A549 (cell line): ENCODE measurements at regions of chr7 and their contacts with region 1.

Region 1: GRCh38 chr7:79176859-79177477 is 276.5 kb downstream of the MAGI2 start:
- DNase-seq: peak; percentile 5 to 55
- ATAC-seq: peak; percentile 70 to 78; a peak in 3 of 6 replicates
- H3K4me3 ChIP-seq: no peak overlapping the region
- H3K27ac ChIP-seq: no peak overlapping the region
- H3K4me1 ChIP-seq: no peaks in the 10 kb centered on the region
- CTCF ChIP-seq: peak; percentile 68
- EP300 ChIP-seq: no peak
- POLR2A ChIP-seq: no peak
- RAD21 ChIP-seq: peak; percentile 77 to 83

Region 2: GRCh38 chr7:78742694-78743093 is 434.3 kb before region 1 on chr7:
- CTCF ChIA-PET with region 1: no interaction called
- POLR2A ChIA-PET with region 1: no interaction called
- DNase-seq: no peak
- ATAC-seq: no peak
- H3K4me3 ChIP-seq: no peak overlapping the region
- H3K27ac ChIP-seq: no peak overlapping the region
- H3K4me1 ChIP-seq: no peaks in the 10 kb centered on the region
- CTCF ChIP-seq: no peak
- EP300 ChIP-seq: no peak
- POLR2A ChIP-seq: no peak
- RAD21 ChIP-seq: no peak

Region 3: GRCh38 chr7:79165225-79165624 is 11.7 kb before region 1 on chr7:
- CTCF ChIA-PET with region 1: interaction called, 12 read pairs
- POLR2A ChIA-PET with region 1: no interaction called
- DNase-seq: no peak
- ATAC-seq: no peak
- H3K4me3 ChIP-seq: no peak overlapping the region
- H3K27ac ChIP-seq: no peak overlapping the region
- H3K4me1 ChIP-seq: no peaks in the 10 kb centered on the region
- CTCF ChIP-seq: no peak
- EP300 ChIP-seq: no peak
- POLR2A ChIP-seq: no peak
- RAD21 ChIP-seq: no peak

Region 4: GRCh38 chr7:79298145-79298760 is 121.3 kb after region 1 on chr7:
- CTCF ChIA-PET with region 1: no interaction called
- POLR2A ChIA-PET with region 1: no interaction called
- DNase-seq: peak; percentile 34 to 68
- ATAC-seq: no peak
- H3K4me3 ChIP-seq: no peak overlapping the region
- H3K27ac ChIP-seq: no peak overlapping the region
- H3K4me1 ChIP-seq: peaks cover 17% of the 10 kb centered on the region
- CTCF ChIP-seq: peak; percentile 76
- EP300 ChIP-seq: no peak
- POLR2A ChIP-seq: no peak
- RAD21 ChIP-seq: peak; percentile 79 to 82